ENCODE measurements at regions of chr2 and their contacts with region 1.

Region 1: DNA sequence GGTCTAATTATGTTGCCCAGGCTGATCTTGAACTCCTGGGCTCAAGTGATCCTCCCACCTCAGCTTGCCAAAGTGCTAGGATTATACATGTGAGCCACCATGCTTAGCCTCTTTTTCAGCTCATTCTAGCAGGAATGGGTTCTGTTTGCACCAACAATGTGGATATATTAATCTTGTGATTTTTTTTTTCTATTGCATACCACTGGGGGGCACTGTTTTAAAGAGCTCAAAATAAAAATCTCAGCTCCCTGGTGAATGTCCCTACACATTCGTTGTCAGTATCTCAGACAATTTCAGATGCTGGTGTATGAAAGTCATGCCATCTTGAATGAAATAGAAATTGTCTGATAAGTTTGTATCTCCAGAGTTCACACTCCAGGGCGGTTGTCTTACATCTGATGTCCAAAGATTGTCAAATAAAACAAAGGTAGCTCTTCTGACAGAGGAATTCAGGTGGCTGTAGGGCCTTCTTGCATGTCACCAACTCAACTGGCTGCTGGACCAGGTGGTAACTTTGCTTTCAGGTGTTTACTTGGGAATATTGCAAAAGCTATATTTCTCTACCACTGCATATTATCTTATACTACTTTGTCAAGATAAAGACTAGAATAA is 3.1 kb upstream of the MATN3 start:
- DNase-seq: no peak
- ATAC-seq: peak; percentile 59
- H3K4me3 ChIP-seq: no peak overlapping the region
- H3K4me1 ChIP-seq: peaks cover 9% of the 10 kb centered on the region
- CTCF ChIP-seq: no peak

Region 2: DNA sequence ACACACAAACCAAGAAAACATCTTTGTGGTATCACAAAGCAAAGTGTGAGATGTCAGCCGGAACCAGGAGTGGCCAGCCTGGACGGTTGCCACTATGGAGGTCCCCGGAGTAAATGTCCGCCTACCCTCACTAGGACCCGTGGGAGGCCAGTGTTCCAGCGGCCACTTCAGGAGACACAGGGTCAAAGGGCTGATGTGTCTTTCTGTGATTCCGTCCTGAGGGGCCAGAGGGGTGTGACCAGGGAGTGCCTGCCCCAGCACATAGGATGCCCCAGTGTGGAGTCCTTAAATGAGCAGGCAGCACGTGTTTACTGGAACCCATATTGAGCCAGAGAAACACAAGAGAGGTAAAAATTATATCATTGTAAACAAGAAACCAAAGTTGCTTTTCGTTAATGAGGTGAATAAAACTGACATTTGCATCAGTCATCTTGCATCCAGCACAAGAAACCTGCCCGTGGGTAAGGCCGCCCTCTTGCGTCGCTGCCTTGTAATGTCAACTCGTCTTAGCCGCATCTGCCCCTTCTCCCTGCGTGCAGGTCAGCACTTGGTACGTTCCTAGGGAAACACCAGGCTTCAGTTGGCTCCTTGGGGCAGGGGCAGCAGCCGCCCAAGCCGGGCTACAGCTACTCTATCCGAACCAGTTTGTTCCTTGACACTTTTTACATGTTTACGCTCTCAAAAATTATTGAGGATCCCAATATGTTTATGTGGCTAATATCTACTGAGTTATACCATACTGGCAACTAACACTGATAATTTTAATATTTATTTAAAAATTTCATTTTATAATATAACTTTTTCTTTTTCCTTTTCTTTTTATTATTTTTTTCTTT is 82.5 kb after region 1 on chr2:
- intact Hi-C with region 1: loop called in 1 of 2 experiments (anchors 5 kb)
- DNase-seq: peak; percentile 84 to 92 (median 85)
- ATAC-seq: peak; percentile 96
- H3K4me3 ChIP-seq: no peak overlapping the region
- H3K4me1 ChIP-seq: peaks cover 2% of the 10 kb centered on the region
- CTCF ChIP-seq: peak; percentile 79

Region 3: GRCh38 chr2:20106746-20107145 is 91.2 kb after region 1 on chr2:
- intact Hi-C with region 1: loop called in 1 of 2 experiments (anchors 5 kb)
- DNase-seq: peak in 2 of 3 donors; percentile 75 to 82
- ATAC-seq: peak; percentile 52
- H3K4me3 ChIP-seq: no peak overlapping the region
- H3K4me1 ChIP-seq: peaks cover 16% of the 10 kb centered on the region
- CTCF ChIP-seq: no peak

Region 4: DNA sequence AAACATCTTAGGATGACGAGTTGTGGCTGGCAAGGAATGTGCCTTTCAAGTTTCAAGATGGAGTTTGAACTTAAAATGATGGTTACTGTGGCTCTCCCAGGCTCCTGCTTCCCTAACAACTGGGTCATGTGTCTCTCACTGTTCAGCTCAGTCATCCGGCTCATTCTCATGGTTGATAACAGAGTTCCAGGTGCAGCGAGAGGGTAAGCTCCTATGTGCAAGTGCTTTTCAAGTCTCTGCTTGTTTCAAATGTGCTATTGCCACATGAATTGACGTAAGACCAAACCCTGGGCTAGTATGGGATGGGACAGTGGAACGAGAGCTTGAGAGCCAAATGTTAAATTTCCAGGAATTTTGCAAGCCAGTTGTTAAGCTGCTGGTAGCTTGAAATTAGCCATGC is 354.6 kb after region 1 on chr2:
- intact Hi-C with region 1: loop called in 1 of 2 experiments (anchors 5 kb)
- DNase-seq: no peak
- ATAC-seq: no peak
- H3K4me3 ChIP-seq: no peak overlapping the region
- H3K4me1 ChIP-seq: no peaks in the 10 kb centered on the region
- CTCF ChIP-seq: no peak